Common myeloid progenitor, CD34-positive (primary cell): ENCODE measurements at regions of chr3 and their contacts with region 1.

Region 1: GRCh38 chr3:158790901-158791589 is 10.8 kb upstream of the MFSD1 start:
- DNase-seq: peak; percentile 79 to 87 (median 87)
- H3K4me3 ChIP-seq: peak overlapping the region in 4 of 7 experiments; percentile 2 to 60 (median 19)
- H3K27ac ChIP-seq: no peak overlapping the region
- H3K4me1 ChIP-seq: peaks cover 2 to 5% (median 4%) of the 10 kb centered on the region in 4 experiments
- H3K27me3 ChIP-seq: no peaks in the 10 kb centered on the region

Region 2: GRCh38 chr3:158528076-158528674 is 262.9 kb before region 1 on chr3:
- CTCF ChIA-PET with region 1: no interaction called
- POLR2A ChIA-PET with region 1: no interaction called
- DNase-seq: peak in 1 of 3 donors; percentile 24
- H3K4me3 ChIP-seq: no peak overlapping the region
- H3K27ac ChIP-seq: no peak overlapping the region
- H3K4me1 ChIP-seq: no peaks in the 10 kb centered on the region
- H3K27me3 ChIP-seq: no peaks in the 10 kb centered on the region

Region 3: GRCh38 chr3:158539414-158540014 is 251.5 kb before region 1 on chr3:
- CTCF ChIA-PET with region 1: interaction called, 64 read pairs
- POLR2A ChIA-PET with region 1: interaction called, 3 read pairs
- DNase-seq: peak; percentile 73 to 86 (median 80)
- H3K4me3 ChIP-seq: no peak overlapping the region
- H3K27ac ChIP-seq: no peak overlapping the region
- H3K4me1 ChIP-seq: no peaks in the 10 kb centered on the region
- H3K27me3 ChIP-seq: no peaks in the 10 kb centered on the region

Region 4: DNA sequence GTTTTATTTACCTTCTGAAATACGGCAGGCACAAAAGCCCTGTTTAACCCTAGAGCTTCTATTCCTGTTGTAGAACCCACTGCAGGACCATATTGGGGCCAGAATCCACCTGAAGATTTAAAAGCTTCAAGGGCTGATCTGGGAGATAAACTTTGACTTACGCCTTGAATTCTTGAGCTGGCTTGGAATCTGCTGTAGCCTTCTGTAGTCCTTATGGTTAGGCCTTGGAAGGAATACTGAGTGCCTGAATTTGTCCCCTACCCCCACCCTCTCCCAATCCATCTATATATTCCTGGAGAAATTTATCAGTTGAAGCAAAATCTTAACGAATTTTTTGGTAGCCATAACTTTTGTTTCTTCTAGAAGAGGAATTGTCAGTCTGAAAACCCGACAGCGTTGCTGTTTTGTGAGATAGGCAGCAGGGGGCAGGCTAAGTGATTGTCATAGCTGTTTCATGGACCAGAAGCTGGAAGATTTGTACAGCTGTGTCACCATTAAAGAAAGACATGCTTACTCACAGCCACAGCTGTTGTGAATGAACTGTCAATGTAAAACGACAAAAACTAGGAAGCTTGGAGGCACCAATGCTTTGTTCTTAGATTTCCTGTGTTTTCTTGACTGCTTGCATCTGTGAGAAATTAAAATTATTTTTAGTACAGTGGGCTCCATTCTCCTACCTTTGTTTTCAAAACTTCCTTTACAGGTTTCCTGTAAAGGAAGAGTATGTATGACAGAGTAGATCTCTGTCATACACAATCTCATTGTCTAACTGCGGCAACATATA is 131.4 kb before region 1 on chr3:
- CTCF ChIA-PET with region 1: interaction called, 84 read pairs
- POLR2A ChIA-PET with region 1: no interaction called
- DNase-seq: peak; percentile 83 to 93 (median 93)
- H3K4me3 ChIP-seq: peak overlapping the region in 1 of 7 experiments; percentile 26
- H3K27ac ChIP-seq: peak overlapping the region; percentile 6 to 46
- H3K4me1 ChIP-seq: peaks cover 0 to 11% (median 8%) of the 10 kb centered on the region in 4 experiments
- H3K27me3 ChIP-seq: no peaks in the 10 kb centered on the region

Region 5: GRCh38 chr3:158727206-158728060 is 63.6 kb before region 1 on chr3:
- CTCF ChIA-PET with region 1: interaction called, 46 read pairs
- POLR2A ChIA-PET with region 1: no interaction called
- DNase-seq: peak; percentile 76 to 88 (median 86)
- H3K4me3 ChIP-seq: peak overlapping the region in 5 of 7 experiments; percentile 4 to 67 (median 37)
- H3K27ac ChIP-seq: peak overlapping the region in 1 of 2 experiments; percentile 43
- H3K4me1 ChIP-seq: peaks cover 10 to 39% (median 21%) of the 10 kb centered on the region in 4 experiments
- H3K27me3 ChIP-seq: peaks cover 0 to 6% (median 4%) of the 10 kb centered on the region in 5 experiments

Region 6: DNA sequence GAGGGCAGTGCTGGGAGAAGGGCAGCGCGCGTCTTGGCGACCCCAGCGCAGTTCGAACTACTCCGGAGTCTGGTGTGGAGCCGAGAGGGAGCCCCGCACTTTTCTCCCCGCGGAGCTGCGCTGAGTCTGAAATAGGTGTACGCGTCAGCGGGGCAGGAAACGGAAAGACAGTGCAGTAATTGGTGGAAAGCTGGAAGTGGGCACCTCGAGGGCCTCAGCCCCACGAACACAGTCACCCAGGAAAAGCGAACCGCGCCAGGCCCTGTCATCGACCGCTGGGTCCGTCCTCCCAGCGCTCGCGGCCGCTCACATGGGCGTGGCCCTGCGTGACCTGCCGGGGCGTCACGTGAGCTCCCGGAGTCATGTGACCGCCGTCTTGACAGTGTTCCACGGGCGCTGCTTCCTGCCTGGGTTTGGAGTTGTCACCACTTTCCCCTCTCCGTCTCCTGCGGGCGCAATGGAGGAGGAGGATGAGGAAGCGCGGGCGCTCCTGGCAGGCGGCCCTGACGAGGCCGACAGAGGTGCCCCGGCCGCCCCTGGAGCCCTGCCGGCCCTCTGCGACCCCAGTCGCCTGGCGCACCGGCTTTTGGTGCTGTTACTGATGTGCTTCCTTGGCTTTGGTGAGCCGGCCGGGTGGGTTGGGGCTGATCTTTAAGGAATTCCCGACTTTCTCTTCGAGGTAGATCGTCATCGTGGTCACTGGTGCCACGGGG is 10.8 kb after region 1 on chr3 and contains the start of gene MFSD1:
- CTCF ChIA-PET with region 1: interaction called, 11 read pairs
- POLR2A ChIA-PET with region 1: no interaction called
- DNase-seq: peak; percentile 81 to 86 (median 82)
- H3K4me3 ChIP-seq: peak within 1 kb of the TSS; percentile 71 to 96 (median 82)
- H3K27ac ChIP-seq: peak within 1 kb of the TSS; percentile 71 to 85
- H3K4me1 ChIP-seq: peaks cover 19 to 35% (median 27%) of the 10 kb centered on the region in 4 experiments
- H3K27me3 ChIP-seq: no peaks in the 10 kb centered on the region